T-cell (primary cell): ENCODE measurements at regions of chr11 and their contacts with region 1.

Region 1: GRCh38 chr11:134223836-134224709 is at the starts of genes NCAPD3 and VPS26B:
- DNase-seq: peak; percentile 91 to 97 (median 95)
- ATAC-seq: peak; percentile 83 to 84 (median 83)
- H3K4me3 ChIP-seq: peak within 1 kb of the TSS; percentile 70 to 85
- H3K4me3 Mint-ChIP-seq: peak within 1 kb of the TSS; percentile 94 to 97 (median 96)
- H3K27ac ChIP-seq: peak within 1 kb of the TSS; percentile 92
- H3K27ac Mint-ChIP-seq: peak within 1 kb of the TSS; percentile 98
- H3K4me1 ChIP-seq: peaks cover 40 to 41% of the 10 kb centered on the region in 2 experiments
- H3K4me1 Mint-ChIP-seq: peaks cover 58 to 73% (median 66%) of the 10 kb centered on the region in 3 donors
- H3K27me3 ChIP-seq: no peaks in the 10 kb centered on the region
- H3K27me3 Mint-ChIP-seq: peaks cover 0 to 1% of the 10 kb centered on the region in 2 donors
- total RNA-seq, gene NCAPD3: 33.7 to 41.9 (median 36.8) TPM
- total RNA-seq, gene VPS26B: 60.3 to 65.1 (median 62.7) TPM

Region 2: GRCh38 chr11:134146598-134146997 is 77.5 kb before region 1 on chr11:
- CTCF ChIA-PET with region 1: no interaction called
- POLR2A ChIA-PET with region 1: no interaction called
- DNase-seq: no peak
- ATAC-seq: no peak
- H3K4me3 ChIP-seq: no peak overlapping the region
- H3K4me3 Mint-ChIP-seq: no peak overlapping the region
- H3K27ac ChIP-seq: no peak overlapping the region
- H3K27ac Mint-ChIP-seq: no peak overlapping the region
- H3K4me1 ChIP-seq: no peaks in the 10 kb centered on the region
- H3K4me1 Mint-ChIP-seq: peaks cover 0 to 5% (median 2%) of the 10 kb centered on the region in 3 donors
- H3K27me3 ChIP-seq: no peaks in the 10 kb centered on the region
- H3K27me3 Mint-ChIP-seq: no peaks in the 10 kb centered on the region

Region 3: DNA sequence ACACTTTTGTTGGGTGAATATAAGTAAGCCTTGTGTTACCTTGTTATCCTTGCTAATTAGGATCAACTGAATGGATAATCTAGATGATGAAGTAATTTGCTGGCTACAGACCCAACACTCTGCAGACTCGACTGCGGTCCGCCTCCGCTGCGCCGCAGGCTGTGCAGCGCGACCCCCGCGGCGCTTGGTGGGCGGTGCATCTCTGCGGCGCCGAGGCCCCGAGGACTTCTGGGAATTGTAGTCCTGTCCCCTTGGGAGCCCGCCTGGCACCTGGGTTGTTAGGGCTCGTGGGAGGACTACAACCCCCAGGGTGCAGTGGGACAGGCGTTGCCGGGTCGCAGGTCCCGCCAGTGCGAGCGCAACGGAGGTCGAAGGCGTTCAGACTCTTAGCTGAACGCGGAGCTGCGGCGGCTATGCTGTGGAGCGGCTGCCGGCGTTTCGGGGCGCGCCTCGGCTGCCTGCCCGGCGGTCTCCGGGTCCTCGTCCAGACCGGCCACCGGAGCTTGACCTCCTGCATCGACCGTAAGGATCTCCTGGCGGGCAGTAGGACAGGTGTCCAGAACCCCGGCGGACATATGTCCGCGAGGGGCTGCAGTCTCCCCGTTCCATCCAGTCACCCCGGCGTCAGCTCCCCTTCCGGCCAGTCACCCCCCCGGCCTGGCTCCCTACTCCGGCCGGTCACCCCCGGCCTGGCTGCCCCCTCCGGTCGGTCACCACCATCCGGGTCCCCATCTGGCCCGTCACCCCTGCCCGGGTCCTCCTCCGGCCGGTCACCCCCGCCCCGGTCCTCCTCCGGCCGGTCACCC is 29.3 kb after region 1 on chr11 and contains the starts of genes ACAD8 and THYN1:
- CTCF ChIA-PET with region 1: interaction called, 3 to 13 read pairs
- POLR2A ChIA-PET with region 1: interaction called in 1 of 2 experiments, 9 read pairs
- DNase-seq: peak; percentile 86 to 98 (median 96)
- ATAC-seq: peak; percentile 99 to 100 (median 99)
- H3K4me3 ChIP-seq: peak within 1 kb of the TSS; percentile 79 to 98
- H3K4me3 Mint-ChIP-seq: peak within 1 kb of the TSS; percentile 89 to 99 (median 93)
- H3K27ac ChIP-seq: peak within 1 kb of the TSS; percentile 30
- H3K27ac Mint-ChIP-seq: peak within 1 kb of the TSS; percentile 84 to 87
- H3K4me1 ChIP-seq: peaks cover 16 to 17% of the 10 kb centered on the region in 2 experiments
- H3K4me1 Mint-ChIP-seq: peaks cover 34 to 44% (median 39%) of the 10 kb centered on the region in 3 donors
- H3K27me3 ChIP-seq: no peaks in the 10 kb centered on the region
- H3K27me3 Mint-ChIP-seq: no peaks in the 10 kb centered on the region
- total RNA-seq, gene ACAD8: 22.1 to 40.2 (median 38.2) TPM
- total RNA-seq, gene THYN1: 37.5 to 57.6 (median 55.5) TPM

Region 4: DNA sequence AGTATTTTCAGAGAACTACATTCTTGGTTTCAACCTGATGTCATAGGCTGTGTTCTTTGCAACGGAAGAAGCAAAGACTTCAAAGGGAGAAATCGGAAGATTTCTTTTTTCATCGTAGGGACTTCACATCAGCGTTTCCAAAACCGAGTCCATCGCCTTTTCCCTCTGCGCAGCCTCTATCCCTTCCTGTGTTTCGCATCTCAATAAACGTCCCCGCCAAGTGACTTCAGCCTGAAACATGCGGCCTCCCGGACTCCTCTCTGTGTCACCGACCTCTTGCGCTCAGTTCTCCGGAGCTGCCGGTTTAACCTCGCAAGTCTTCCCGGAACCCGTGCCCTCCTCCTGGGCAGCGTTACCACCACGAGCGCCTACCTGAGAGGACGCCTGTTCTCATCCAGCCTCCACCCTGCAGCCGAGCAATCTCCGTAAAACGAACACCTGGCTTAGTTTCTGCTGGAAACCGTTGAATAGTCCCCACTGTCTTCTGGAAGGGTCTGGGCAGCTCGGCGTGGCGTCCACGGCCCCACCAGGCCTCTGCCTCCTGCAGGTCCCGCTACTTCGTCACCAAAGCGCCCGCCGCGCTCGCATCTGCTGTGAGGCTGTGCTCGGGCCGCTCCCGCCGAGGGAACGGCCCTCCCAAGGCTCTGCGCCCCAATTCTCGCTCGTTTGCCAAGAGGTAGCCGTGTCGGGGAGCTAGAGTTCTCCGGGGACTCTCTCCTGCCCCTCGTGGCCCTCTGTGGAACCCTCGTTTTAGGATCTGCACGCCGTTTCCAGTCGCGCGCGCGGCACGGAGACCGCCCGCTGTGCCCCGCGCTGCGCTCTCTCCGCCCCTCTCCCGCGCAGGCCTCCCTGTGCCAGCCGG is 51.7 kb after region 1 on chr11 and contains the start of gene GLB1L3:
- CTCF ChIA-PET with region 1: interaction called in 1 of 2 experiments, 10 read pairs
- POLR2A ChIA-PET with region 1: interaction called, 4 to 6 read pairs
- DNase-seq: peak; percentile 56 to 86 (median 75)
- ATAC-seq: peak; percentile 91 to 94 (median 92)
- H3K4me3 ChIP-seq: peak within 1 kb of the TSS; percentile 86 to 98
- H3K4me3 Mint-ChIP-seq: peak within 1 kb of the TSS; percentile 93 to 95 (median 94)
- H3K27ac ChIP-seq: peak within 1 kb of the TSS; percentile 57
- H3K27ac Mint-ChIP-seq: peak within 1 kb of the TSS; percentile 83 to 84
- H3K4me1 ChIP-seq: peaks cover 17 to 24% of the 10 kb centered on the region in 2 experiments
- H3K4me1 Mint-ChIP-seq: peaks cover 48 to 50% (median 50%) of the 10 kb centered on the region in 3 donors
- H3K27me3 ChIP-seq: peaks cover 5 to 17% of the 10 kb centered on the region in 2 experiments
- H3K27me3 Mint-ChIP-seq: peaks cover 3 to 10% of the 10 kb centered on the region in 2 donors
- total RNA-seq, gene GLB1L3: 1.3 to 2.8 (median 1.9) TPM